ENCODE measurements at regions of chr10 and their contacts with region 1.

Region 1: DNA sequence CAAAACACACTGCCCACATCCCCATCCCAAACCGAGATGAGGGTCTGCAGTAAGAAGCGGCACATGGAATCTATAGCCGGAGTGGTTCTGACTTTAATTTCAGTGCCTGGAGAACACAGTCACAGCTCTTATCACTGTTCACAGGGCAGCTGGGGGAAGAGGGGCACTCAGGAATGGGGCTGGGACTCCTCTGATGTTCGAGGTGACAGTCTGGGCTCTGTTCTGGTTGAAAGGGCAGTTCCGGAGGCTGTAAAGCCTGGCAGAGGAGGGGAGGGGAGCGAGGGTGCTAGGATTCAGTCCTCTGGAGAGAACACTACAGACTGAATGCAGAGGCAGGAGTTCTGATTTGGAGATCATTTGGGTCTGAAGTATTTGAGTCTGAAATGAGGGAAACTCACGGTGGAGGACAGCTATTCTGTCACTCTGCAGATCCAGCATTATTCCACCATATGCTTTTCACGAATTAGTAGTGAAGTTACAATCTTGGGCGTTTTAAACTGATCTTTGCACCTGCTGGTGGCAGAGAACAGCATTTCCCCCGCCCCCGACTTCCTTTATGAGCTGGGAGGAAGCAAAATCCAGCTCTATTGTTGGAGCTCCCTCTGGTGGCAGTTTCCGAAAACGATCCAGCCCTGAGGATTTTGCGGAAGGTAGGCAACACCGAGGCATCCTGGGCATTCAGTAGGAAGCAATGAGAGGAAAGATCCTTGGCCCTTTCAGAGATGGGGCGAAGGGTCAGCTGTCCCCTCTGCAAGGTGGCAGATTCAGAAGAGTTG is 22.7 kb upstream of the KCNK18 start:
- DNase-seq: peak; percentile 66 to 89 (median 79)
- ATAC-seq: peak; percentile 83
- H3K4me3 ChIP-seq: peak overlapping the region; percentile 74
- H3K4me3 Mint-ChIP-seq: peak overlapping the region; percentile 91
- H3K27ac ChIP-seq: no peak overlapping the region
- H3K27ac Mint-ChIP-seq: peak overlapping the region; percentile 40
- H3K4me1 ChIP-seq: peaks cover 17% of the 10 kb centered on the region
- H3K4me1 Mint-ChIP-seq: peaks cover 16% of the 10 kb centered on the region
- H3K27me3 ChIP-seq: peaks cover 17 to 32% of the 10 kb centered on the region in 2 experiments
- H3K27me3 Mint-ChIP-seq: peaks cover 49% of the 10 kb centered on the region
- CTCF ChIP-seq: peak; percentile 80

Region 2: DNA sequence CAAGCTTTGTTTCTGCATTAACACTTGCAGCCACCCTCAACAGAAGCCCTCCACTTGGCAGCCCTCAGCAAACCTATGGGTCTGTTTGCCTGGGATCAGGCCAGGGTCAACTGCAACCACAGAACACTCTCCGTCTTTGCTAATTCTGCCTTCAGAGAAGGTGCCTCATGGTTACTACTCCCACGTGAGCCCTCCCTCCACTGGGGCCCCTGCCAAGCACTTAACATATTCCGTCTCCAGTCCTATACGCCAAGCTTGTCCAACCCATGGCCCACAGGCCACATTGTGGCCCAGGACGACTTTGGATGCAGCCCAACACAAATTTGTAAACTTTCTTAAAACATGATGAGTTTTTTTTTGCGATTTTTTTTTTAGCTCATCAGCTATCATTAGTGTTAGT is 487.0 kb before region 1 on chr10:
- CTCF ChIA-PET with region 1: interaction called, 10 read pairs
- POLR2A ChIA-PET with region 1: no interaction called
- intact Hi-C with region 1: loop called (anchors 1 kb)
- DNase-seq: no peak
- ATAC-seq: no peak
- H3K4me3 ChIP-seq: no peak overlapping the region
- H3K4me3 Mint-ChIP-seq: no peak overlapping the region
- H3K27ac ChIP-seq: no peak overlapping the region
- H3K27ac Mint-ChIP-seq: no peak overlapping the region
- H3K4me1 ChIP-seq: no peaks in the 10 kb centered on the region
- H3K4me1 Mint-ChIP-seq: no peaks in the 10 kb centered on the region
- H3K27me3 ChIP-seq: peaks cover 10 to 20% of the 10 kb centered on the region in 2 experiments
- H3K27me3 Mint-ChIP-seq: peaks cover 66% of the 10 kb centered on the region
- CTCF ChIP-seq: no peak

Region 3: GRCh38 chr10:116742367-116743265 is 432.0 kb before region 1 on chr10 and contains the start of gene HSPA12A:
- CTCF ChIA-PET with region 1: no interaction called
- POLR2A ChIA-PET with region 1: no interaction called
- intact Hi-C with region 1: loop called in 1 of 2 experiments (anchors 5 kb)
- DNase-seq: peak in 9 of 14 experiments; percentile 20 to 68 (median 48)
- ATAC-seq: peak; percentile 78
- H3K4me3 ChIP-seq: peak within 1 kb of the TSS; percentile 26
- H3K4me3 Mint-ChIP-seq: peak within 1 kb of the TSS; percentile 80
- H3K27ac ChIP-seq: no peak within 1 kb of the TSS
- H3K27ac Mint-ChIP-seq: no peak within 1 kb of the TSS
- H3K4me1 ChIP-seq: peaks cover 17% of the 10 kb centered on the region
- H3K4me1 Mint-ChIP-seq: peaks cover 5% of the 10 kb centered on the region
- H3K27me3 ChIP-seq: peaks cover 51 to 89% of the 10 kb centered on the region in 2 experiments
- H3K27me3 Mint-ChIP-seq: peaks cover 82% of the 10 kb centered on the region
- CTCF ChIP-seq: no peak
- total RNA-seq, gene HSPA12A: 0.49 TPM in 1 of 2 experiments, not detected in the other

Region 4: DNA sequence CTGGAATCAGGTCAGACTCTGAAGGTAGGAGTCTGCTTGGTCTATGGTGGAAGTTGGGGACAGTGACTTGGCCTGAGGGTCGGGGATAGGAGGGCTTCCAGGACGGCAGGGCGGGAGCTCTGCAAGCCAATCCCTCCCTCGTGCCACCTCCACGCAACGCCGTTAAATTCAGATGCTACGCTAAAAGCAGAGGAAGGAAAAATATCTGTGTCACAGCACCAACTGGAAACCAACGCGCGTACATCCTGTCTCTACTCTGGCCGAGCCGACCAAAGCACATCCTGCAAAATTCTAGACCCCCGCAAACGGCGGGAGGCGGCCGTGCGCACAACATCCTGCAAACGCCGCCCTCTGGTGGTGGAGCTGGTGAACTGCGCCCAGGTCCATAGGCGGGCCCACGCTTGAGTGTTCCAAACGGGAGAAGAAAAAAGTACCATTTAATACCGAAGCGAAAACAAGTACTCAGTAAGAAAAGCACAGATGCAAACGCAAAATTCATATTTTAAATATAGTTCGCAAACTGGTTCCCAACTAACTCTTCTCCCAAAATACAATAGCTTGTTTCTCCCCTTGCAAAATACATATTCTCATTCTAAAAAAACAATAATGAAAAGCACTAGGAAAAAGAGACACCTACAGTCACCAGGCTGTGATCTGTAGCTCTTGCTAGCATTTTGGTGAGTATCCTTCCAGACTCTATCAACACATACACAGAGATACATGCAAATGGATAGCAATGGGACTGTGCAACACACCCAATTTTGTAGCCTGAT is 386.5 kb before region 1 on chr10:
- CTCF ChIA-PET with region 1: interaction called, 10 read pairs
- POLR2A ChIA-PET with region 1: interaction called, 7 read pairs
- intact Hi-C with region 1: no loop called
- DNase-seq: peak; percentile 53 to 79 (median 71)
- ATAC-seq: peak; percentile 87
- H3K4me3 ChIP-seq: peak overlapping the region; percentile 1
- H3K4me3 Mint-ChIP-seq: peak overlapping the region; percentile 60
- H3K27ac ChIP-seq: no peak overlapping the region
- H3K27ac Mint-ChIP-seq: peak overlapping the region; percentile 80
- H3K4me1 ChIP-seq: peaks cover 9% of the 10 kb centered on the region
- H3K4me1 Mint-ChIP-seq: peaks cover 17% of the 10 kb centered on the region
- H3K27me3 ChIP-seq: peaks cover 0 to 4% of the 10 kb centered on the region in 2 experiments
- H3K27me3 Mint-ChIP-seq: peaks cover 52% of the 10 kb centered on the region
- CTCF ChIP-seq: peak; percentile 99

Region 5: DNA sequence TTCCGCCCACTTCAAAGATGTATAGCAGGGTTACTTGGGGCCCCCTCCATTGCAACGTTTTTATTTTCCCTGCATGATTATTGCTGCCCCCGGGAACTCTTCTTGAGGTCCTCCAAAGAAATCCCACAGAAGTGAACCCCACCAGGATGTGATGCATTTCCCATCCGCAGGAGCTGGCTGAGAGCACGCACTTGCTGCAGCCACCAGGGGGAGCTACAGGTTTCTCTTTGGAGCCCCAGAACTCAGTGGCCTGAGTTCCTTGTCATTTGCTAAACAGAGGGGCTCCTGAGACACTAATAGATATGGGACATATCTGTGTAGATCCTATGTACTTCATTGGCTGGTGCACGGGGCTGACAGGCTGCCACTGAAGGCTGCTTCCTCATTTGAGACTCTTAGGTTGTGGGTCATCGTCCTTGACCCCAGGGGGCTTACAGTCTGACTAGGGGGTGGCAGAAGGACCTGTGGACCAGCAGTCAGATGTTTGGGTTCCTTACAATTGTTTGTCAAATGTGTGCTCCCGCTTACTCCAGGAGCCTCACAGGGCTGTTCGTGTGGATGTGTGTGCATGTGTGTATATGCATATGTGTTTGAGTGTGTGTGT is 377.6 kb before region 1 on chr10:
- CTCF ChIA-PET with region 1: interaction called, 27 read pairs
- POLR2A ChIA-PET with region 1: interaction called, 10 read pairs
- intact Hi-C with region 1: loop called (anchors 1 kb)
- DNase-seq: peak; percentile 41 to 79 (median 54)
- ATAC-seq: peak; percentile 75
- H3K4me3 ChIP-seq: no peak overlapping the region
- H3K4me3 Mint-ChIP-seq: no peak overlapping the region
- H3K27ac ChIP-seq: no peak overlapping the region
- H3K27ac Mint-ChIP-seq: no peak overlapping the region
- H3K4me1 ChIP-seq: no peaks in the 10 kb centered on the region
- H3K4me1 Mint-ChIP-seq: no peaks in the 10 kb centered on the region
- H3K27me3 ChIP-seq: peaks cover 0 to 7% of the 10 kb centered on the region in 2 experiments
- H3K27me3 Mint-ChIP-seq: peaks cover 55% of the 10 kb centered on the region
- CTCF ChIP-seq: peak; percentile 69

Region 6: DNA sequence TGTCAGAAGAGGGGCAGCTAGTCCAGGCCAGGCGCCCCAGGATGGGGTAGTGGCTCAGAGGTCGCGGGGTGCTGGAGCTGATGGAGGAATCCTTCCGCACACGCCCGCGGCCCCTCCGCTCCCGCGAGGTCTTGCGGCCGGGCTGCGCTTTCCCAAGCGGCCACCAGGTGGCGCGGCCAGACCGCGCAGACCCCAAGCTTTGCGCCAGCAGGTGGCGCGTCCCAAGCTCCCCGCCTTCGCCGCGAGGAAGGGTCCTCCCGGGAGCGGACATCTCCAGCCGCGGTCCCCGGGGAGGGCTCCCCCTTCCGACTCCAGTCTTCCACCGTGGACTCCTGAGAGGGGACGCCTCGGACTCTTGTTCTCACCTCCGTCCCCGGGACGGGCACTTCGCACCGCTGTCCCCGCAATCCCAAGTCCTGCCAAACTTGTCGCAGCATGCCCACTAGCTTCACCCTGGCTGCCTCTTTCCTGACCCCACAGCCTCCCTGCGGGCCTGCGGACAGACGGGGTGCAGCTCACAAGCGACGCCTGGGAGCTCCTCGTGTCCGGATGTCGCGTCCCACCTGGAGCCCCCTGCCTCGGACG is 42.1 kb after region 1 on chr10:
- CTCF ChIA-PET with region 1: interaction called, 10 read pairs
- POLR2A ChIA-PET with region 1: no interaction called
- intact Hi-C with region 1: no loop called
- DNase-seq: peak; percentile 37 to 86 (median 60)
- ATAC-seq: peak; percentile 87
- H3K4me3 ChIP-seq: peak overlapping the region; percentile 67
- H3K4me3 Mint-ChIP-seq: peak overlapping the region; percentile 75
- H3K27ac ChIP-seq: no peak overlapping the region
- H3K27ac Mint-ChIP-seq: no peak overlapping the region
- H3K4me1 ChIP-seq: peaks cover 15% of the 10 kb centered on the region
- H3K4me1 Mint-ChIP-seq: no peaks in the 10 kb centered on the region
- H3K27me3 ChIP-seq: peaks cover 18 to 23% of the 10 kb centered on the region in 2 experiments
- H3K27me3 Mint-ChIP-seq: peaks cover 57% of the 10 kb centered on the region
- CTCF ChIP-seq: peak; percentile 100

Region 7: GRCh38 chr10:117431160-117431559 is 256.5 kb after region 1 on chr10:
- CTCF ChIA-PET with region 1: no interaction called
- POLR2A ChIA-PET with region 1: no interaction called
- intact Hi-C with region 1: no loop called
- DNase-seq: no peak
- ATAC-seq: no peak
- H3K4me3 ChIP-seq: no peak overlapping the region
- H3K4me3 Mint-ChIP-seq: no peak overlapping the region
- H3K27ac ChIP-seq: no peak overlapping the region
- H3K27ac Mint-ChIP-seq: no peak overlapping the region
- H3K4me1 ChIP-seq: no peaks in the 10 kb centered on the region
- H3K4me1 Mint-ChIP-seq: no peaks in the 10 kb centered on the region
- H3K27me3 ChIP-seq: no peaks in the 10 kb centered on the region
- H3K27me3 Mint-ChIP-seq: peaks cover 31% of the 10 kb centered on the region
- CTCF ChIP-seq: no peak

Measured in CD4-positive, alpha-beta T cell (primary cell).